ENCODE measurements at regions of chr4 and their contacts with region 1.

Region 1: GRCh38 chr4:30443289-30443688 is 276.9 kb upstream of the PCDH7 start:
- DNase-seq: no peak
- ATAC-seq: no peak
- H3K4me3 ChIP-seq: no peak overlapping the region
- H3K27ac ChIP-seq: no peak overlapping the region
- H3K4me1 ChIP-seq: no peaks in the 10 kb centered on the region
- H3K27me3 ChIP-seq: no peaks in the 10 kb centered on the region

Region 2: GRCh38 chr4:30269850-30270249 is 173.4 kb before region 1 on chr4:
- intact Hi-C with region 1: no loop called
- DNase-seq: no peak
- ATAC-seq: no peak
- H3K4me3 ChIP-seq: no peak overlapping the region
- H3K27ac ChIP-seq: no peak overlapping the region
- H3K4me1 ChIP-seq: no peaks in the 10 kb centered on the region
- H3K27me3 ChIP-seq: no peaks in the 10 kb centered on the region

Region 3: GRCh38 chr4:30380404-30380998 is 62.8 kb before region 1 on chr4:
- intact Hi-C with region 1: loop called in 1 of 2 experiments (anchors 2 kb)
- DNase-seq: no peak
- ATAC-seq: no peak
- H3K4me3 ChIP-seq: no peak overlapping the region
- H3K27ac ChIP-seq: no peak overlapping the region
- H3K4me1 ChIP-seq: no peaks in the 10 kb centered on the region
- H3K27me3 ChIP-seq: no peaks in the 10 kb centered on the region